H1 (cell line): ENCODE measurements at regions of chr5 and their contacts with region 1.

Region 1: DNA sequence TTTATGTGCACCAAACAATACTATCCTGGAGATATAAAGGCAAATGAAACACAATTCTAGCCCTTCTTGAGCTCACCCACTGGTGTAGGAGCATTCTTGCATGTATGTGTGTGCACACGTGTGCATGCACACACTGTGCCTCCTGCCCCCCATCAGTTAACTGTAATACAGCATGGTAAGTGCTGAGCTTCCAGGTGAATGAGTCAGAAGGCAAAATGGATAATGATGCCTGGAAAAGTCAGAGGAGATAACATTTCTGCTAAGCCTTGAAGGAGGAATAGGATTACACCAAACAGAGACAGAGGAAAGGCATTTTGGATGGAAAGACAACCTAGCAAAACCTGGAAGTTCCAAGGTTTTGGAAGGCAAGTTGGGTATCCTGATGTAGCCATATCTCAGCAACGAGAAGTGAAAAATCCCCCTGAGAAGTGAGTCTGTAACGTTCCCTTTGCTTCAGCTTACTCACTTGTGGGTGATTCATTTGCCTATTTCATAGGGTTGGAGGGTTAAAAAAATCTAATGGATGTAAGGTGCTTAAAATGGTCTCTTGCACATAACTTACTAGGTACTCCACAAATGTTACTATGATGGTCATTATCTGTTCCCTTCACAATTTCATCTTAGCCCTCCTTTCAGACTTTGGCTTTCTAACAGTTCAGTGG is 101.4 kb upstream of the STC2 start:
- DNase-seq: no peak
- H3K4me3 ChIP-seq: no peak overlapping the region
- H3K27ac ChIP-seq: no peak overlapping the region
- H3K4me1 ChIP-seq: no peaks in the 10 kb centered on the region
- H3K27me3 ChIP-seq: no peaks in the 10 kb centered on the region
- CTCF ChIP-seq: no peak
- EP300 ChIP-seq: no peak
- POLR2A ChIP-seq: no peak
- RAD21 ChIP-seq: no peak

Region 2: GRCh38 chr5:173417520-173417919 is 12.1 kb before region 1 on chr5:
- CTCF ChIA-PET with region 1: interaction called, 12 read pairs
- POLR2A ChIA-PET with region 1: interaction called, 3 read pairs
- DNase-seq: no peak
- H3K4me3 ChIP-seq: no peak overlapping the region
- H3K27ac ChIP-seq: no peak overlapping the region
- H3K4me1 ChIP-seq: no peaks in the 10 kb centered on the region
- H3K27me3 ChIP-seq: no peaks in the 10 kb centered on the region
- CTCF ChIP-seq: no peak
- EP300 ChIP-seq: no peak
- POLR2A ChIP-seq: no peak
- RAD21 ChIP-seq: no peak

Region 3: DNA sequence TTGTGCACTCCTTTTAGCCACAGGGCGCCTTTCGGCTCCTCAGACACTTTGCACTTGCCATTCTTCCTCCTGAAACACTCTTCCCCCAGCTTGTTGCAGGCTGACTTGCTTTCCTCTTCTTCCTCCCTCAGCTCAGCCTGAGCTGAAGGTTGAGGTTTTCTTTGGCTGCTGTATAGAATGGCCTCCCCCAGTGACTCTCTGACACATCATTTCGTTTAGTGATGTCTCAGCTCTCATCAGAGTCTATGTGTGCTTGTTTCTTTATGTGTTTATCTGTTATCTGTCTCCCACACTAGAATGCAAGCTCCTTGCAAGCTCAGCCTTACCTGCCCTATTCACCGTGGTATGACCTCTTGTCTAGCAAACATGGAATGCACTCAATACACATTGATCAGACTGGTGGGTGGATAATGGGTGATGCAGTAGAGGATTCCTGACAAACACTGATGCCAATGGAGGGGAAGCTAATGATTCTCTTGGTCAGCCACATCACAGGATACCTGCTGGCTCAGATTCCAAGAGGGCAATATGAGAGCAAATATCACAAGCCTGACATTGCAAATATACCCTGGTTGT is 11.5 kb after region 1 on chr5:
- CTCF ChIA-PET with region 1: no interaction called
- POLR2A ChIA-PET with region 1: no interaction called
- DNase-seq: no peak
- H3K4me3 ChIP-seq: no peak overlapping the region
- H3K27ac ChIP-seq: no peak overlapping the region
- H3K4me1 ChIP-seq: peaks cover 0 to 3% (median 0%) of the 10 kb centered on the region in 4 experiments; a peak in 1 of 7 replicates
- H3K27me3 ChIP-seq: peaks cover 0 to 1% (median 0%) of the 10 kb centered on the region in 4 experiments; a peak in 2 of 7 replicates
- CTCF ChIP-seq: no peak
- EP300 ChIP-seq: no peak
- POLR2A ChIP-seq: no peak
- RAD21 ChIP-seq: no peak